Activated CD4-positive, alpha-beta memory T cell treated with anti-CD3 and anti-CD28 coated beads, Interleukin-2, amount 10 ng/mL, durations not matched to agents 7 days and 5 days (primary cell): ENCODE measurements at regions of chr4 and their contacts with region 1.

Region 1: DNA sequence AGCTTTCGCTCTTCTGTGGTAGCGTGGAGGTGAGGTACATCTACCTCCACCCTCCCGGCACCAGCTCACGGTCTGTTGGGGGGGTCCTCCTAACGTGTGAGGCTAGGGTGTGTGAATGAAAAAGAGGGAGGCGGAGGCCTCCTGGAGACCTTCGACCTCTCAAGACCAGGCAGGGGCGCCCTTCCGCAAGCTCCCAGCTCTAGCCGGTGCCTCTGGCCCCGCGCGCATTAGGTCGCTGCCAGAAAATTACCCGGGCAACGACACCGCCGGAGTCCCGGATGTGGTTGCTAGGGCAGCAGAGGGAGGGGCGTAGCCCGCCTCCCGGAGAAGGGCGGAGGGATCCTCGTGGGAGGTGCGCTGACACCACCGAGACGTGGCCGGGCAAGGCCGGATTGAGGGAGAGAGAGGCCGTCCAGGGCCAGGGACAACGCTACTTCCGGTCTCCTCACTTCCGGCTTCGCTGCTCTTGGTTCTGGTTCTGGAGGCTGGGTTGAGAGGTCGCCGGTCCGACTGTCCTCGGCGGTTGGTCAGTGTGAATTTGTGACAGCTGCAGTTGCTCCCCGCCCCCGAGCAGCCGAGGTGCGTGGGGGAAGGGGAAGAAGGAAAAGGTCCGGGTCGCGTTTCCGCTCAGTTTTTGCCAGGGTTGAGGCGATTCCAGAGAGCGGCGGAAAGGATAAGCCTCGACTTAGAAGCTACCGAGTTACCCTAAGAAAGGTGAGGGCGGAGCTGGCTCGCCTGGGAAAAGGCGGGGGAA is at the starts of genes ARFIP1 and TIGD4:
- DNase-seq: peak; percentile 97
- H3K4me3 Mint-ChIP-seq: peak within 1 kb of the TSS; percentile 99
- H3K27ac Mint-ChIP-seq: peak within 1 kb of the TSS; percentile 94
- H3K4me1 Mint-ChIP-seq: peaks cover 46% of the 10 kb centered on the region
- H3K27me3 Mint-ChIP-seq: peaks cover 11% of the 10 kb centered on the region
- total RNA-seq, gene ARFIP1: 15.5 to 16.3 TPM
- total RNA-seq, gene TIGD4: 0.13 to 0.35 TPM

Region 2: DNA sequence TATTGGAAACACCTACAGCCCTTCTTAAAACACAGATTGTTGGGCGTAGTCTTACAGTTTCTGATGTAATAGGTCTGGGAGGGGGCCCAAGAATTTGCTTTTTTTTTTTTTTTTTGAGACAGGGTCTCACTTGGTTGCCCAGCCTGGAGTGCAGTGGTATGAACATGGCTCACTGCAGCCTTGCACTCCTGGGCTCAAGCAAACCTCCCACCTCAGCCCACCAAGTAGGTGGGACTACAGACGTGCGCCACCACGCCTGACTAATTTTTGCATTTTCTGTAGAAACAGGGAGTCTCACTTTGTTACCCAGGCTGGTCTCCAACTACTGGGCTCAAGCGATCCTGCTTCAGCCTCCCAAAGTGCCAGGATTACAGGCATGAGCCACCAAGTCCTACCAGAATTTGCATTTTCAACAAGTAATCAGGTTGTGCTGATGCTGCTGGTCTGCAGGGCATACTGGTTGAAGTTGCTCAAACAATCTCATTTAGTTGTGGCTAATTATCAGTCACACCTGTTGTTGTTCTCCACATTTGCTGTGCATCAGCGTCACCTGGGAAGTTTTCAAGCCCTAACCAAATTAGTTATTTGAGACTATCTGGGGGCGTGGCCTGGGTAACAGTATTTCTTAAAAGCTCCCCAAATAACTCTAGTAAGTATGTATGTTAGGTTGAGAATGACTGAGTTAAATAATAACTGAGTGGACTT is 113.8 kb before region 1 on chr4:
- CTCF ChIA-PET with region 1: no interaction called
- POLR2A ChIA-PET with region 1: no interaction called
- DNase-seq: no peak
- H3K4me3 Mint-ChIP-seq: no peak overlapping the region
- H3K27ac Mint-ChIP-seq: no peak overlapping the region
- H3K4me1 Mint-ChIP-seq: peaks cover 30% of the 10 kb centered on the region
- H3K27me3 Mint-ChIP-seq: no peaks in the 10 kb centered on the region

Region 3: GRCh38 chr4:152807294-152807829 is 27.7 kb after region 1 on chr4:
- CTCF ChIA-PET with region 1: interaction called, 4 read pairs
- POLR2A ChIA-PET with region 1: interaction called, 12 read pairs
- DNase-seq: no peak
- H3K4me3 Mint-ChIP-seq: peak overlapping the region; percentile 48
- H3K27ac Mint-ChIP-seq: peak overlapping the region; percentile 61
- H3K4me1 Mint-ChIP-seq: peaks cover 23% of the 10 kb centered on the region
- H3K27me3 Mint-ChIP-seq: no peaks in the 10 kb centered on the region

Region 4: GRCh38 chr4:152910521-152910920 is 130.8 kb after region 1 on chr4:
- CTCF ChIA-PET with region 1: no interaction called
- POLR2A ChIA-PET with region 1: no interaction called
- DNase-seq: no peak
- H3K4me3 Mint-ChIP-seq: no peak overlapping the region
- H3K27ac Mint-ChIP-seq: no peak overlapping the region
- H3K4me1 Mint-ChIP-seq: no peaks in the 10 kb centered on the region
- H3K27me3 Mint-ChIP-seq: no peaks in the 10 kb centered on the region